Activated CD4-positive, alpha-beta memory T cell treated with anti-CD3 and anti-CD28 coated beads for 36 hours (primary cell): ENCODE measurements at regions of chr2 and their contacts with region 1.

Region 1: GRCh38 chr2:33275689-33276444 is 200.6 kb upstream of the RASGRP3 start:
- DNase-seq: peak; percentile 67
- H3K4me3 Mint-ChIP-seq: no peak overlapping the region
- H3K27ac Mint-ChIP-seq: no peak overlapping the region
- H3K4me1 Mint-ChIP-seq: peaks cover 7% of the 10 kb centered on the region
- H3K27me3 Mint-ChIP-seq: peaks cover 9% of the 10 kb centered on the region

Region 2: DNA sequence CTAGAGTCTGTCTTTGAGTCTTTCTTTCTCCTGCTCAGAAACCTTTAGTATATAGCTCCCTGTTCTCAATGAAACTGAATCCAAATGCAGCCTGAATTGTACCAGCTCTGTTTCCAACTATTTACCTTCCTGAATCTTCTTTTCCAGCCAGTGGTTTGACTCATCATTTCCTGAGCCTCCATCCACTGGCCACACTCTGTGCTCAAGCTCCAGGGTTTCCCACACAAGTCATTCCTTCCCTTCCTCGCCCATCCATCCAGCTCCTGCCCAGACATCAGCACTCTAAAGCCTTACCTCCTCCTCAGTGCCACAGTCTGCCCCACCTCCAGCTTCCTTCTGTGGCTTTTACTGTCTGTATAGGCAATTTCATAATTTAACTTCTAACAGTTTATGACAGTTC is 33.0 kb before region 1 on chr2:
- CTCF ChIA-PET with region 1: no interaction called
- POLR2A ChIA-PET with region 1: no interaction called
- intact Hi-C with region 1: no loop called
- DNase-seq: no peak
- H3K4me3 Mint-ChIP-seq: no peak overlapping the region
- H3K27ac Mint-ChIP-seq: no peak overlapping the region
- H3K4me1 Mint-ChIP-seq: no peaks in the 10 kb centered on the region
- H3K27me3 Mint-ChIP-seq: no peaks in the 10 kb centered on the region

Region 3: DNA sequence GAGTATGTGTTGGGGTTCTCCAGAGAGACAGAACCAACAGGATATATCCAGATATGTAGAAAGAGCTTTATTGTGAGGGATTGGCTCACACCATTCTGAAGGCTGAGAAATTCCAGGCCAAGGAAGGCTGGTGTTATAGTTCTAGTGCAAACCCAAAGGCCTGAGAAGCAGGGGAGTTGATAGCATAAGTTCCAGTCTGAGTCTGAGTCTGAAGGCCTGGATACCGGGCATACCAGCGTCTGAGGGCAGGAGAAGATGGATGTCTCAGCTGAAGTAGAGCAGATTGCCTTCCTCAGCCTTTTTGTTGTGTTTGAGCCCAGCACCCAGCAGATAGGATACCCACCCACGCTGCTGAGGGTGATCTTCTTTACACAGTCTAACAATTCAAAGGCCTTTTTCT is 11.1 kb before region 1 on chr2:
- CTCF ChIA-PET with region 1: no interaction called
- POLR2A ChIA-PET with region 1: no interaction called
- intact Hi-C with region 1: no loop called
- DNase-seq: no peak
- H3K4me3 Mint-ChIP-seq: no peak overlapping the region
- H3K27ac Mint-ChIP-seq: no peak overlapping the region
- H3K4me1 Mint-ChIP-seq: no peaks in the 10 kb centered on the region
- H3K27me3 Mint-ChIP-seq: peaks cover 7% of the 10 kb centered on the region

Region 4: DNA sequence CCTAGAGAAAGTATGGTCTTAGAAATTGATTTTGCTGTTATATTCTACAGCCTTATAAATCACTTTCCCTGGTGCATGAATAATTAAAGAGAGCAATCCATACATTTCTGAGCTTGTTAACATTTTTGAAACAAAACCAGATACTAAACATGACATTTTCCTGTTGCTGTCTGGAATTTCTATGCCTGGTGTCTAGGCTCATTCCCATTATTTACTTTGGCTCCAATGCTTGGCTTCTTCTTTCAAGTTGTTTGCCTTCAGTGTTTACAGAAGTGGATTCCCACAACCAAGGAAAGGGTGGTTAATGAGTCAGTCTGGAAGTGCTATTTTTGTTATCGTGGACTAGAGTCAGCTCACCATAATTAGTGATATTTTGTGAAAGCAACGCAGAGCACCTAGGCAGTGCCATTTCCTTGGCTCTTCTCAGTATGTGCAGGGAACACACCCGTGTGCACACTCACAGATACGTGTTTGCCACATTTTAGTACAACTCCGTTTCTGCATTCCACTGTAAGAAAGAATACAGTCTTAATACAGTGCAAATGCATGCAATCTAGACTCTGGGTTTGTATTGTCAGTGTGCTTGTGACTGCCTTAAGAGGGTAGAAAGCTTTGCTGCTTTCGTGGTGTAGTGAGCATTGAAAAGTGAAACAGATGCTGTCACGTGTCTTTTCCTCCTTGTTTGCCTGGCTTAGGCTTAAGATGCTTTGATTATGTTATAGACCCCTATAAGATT is 15.6 kb after region 1 on chr2:
- CTCF ChIA-PET with region 1: no interaction called
- POLR2A ChIA-PET with region 1: no interaction called
- intact Hi-C with region 1: no loop called
- DNase-seq: no peak
- H3K4me3 Mint-ChIP-seq: no peak overlapping the region
- H3K27ac Mint-ChIP-seq: no peak overlapping the region
- H3K4me1 Mint-ChIP-seq: no peaks in the 10 kb centered on the region
- H3K27me3 Mint-ChIP-seq: peaks cover 21% of the 10 kb centered on the region

Region 5: GRCh38 chr2:33312355-33312754 is 36.5 kb after region 1 on chr2:
- CTCF ChIA-PET with region 1: no interaction called
- POLR2A ChIA-PET with region 1: no interaction called
- intact Hi-C with region 1: loop called (anchors 2 kb)
- DNase-seq: no peak
- H3K4me3 Mint-ChIP-seq: no peak overlapping the region
- H3K27ac Mint-ChIP-seq: no peak overlapping the region
- H3K4me1 Mint-ChIP-seq: peaks cover 11% of the 10 kb centered on the region
- H3K27me3 Mint-ChIP-seq: peaks cover 33% of the 10 kb centered on the region

Region 6: DNA sequence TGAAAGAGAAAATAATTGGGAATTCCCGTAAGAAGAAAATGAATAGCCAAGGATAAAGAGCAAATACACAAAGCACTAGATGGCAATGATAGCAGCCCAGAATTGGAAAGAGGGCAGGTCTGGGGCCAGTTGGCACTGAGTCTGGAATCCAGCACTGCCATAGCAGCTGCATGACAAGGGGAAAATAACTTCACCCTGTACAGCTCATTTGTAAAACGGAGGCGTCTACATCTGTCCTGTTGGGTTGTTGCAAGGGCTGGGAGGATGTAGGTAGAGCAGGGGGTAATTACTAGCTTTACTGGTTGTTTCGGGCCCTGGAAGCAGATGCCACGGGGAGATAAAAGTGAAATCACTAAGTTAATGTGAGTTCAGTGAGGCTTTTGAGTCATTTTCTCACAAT is 90.6 kb after region 1 on chr2:
- CTCF ChIA-PET with region 1: no interaction called
- POLR2A ChIA-PET with region 1: no interaction called
- intact Hi-C with region 1: loop called (anchors 10 kb)
- DNase-seq: no peak
- H3K4me3 Mint-ChIP-seq: no peak overlapping the region
- H3K27ac Mint-ChIP-seq: no peak overlapping the region
- H3K4me1 Mint-ChIP-seq: no peaks in the 10 kb centered on the region
- H3K27me3 Mint-ChIP-seq: peaks cover 2% of the 10 kb centered on the region

Region 7: GRCh38 chr2:33488715-33489540 is 213.1 kb after region 1 on chr2:
- CTCF ChIA-PET with region 1: no interaction called
- POLR2A ChIA-PET with region 1: no interaction called
- intact Hi-C with region 1: loop called (anchors 1 kb)
- DNase-seq: no peak
- H3K4me3 Mint-ChIP-seq: no peak overlapping the region
- H3K27ac Mint-ChIP-seq: peak overlapping the region; percentile 66
- H3K4me1 Mint-ChIP-seq: peaks cover 37% of the 10 kb centered on the region
- H3K27me3 Mint-ChIP-seq: peaks cover 13% of the 10 kb centered on the region